Naive thymus-derived CD4-positive, alpha-beta T cell (primary cell): ENCODE measurements at regions of chr6 and their contacts with region 1.

Region 1: GRCh38 chr6:36131511-36132245 is 1.4 kb downstream of the MAPK13 start:
- DNase-seq: peak in 7 of 9 donors; percentile 41 to 58 (median 48)
- ATAC-seq: peak; percentile 67
- H3K4me3 ChIP-seq: peak overlapping the region; percentile 72
- H3K4me3 Mint-ChIP-seq: peak overlapping the region; percentile 85 to 92 (median 88)
- H3K27ac ChIP-seq: peak overlapping the region; percentile 87
- H3K27ac Mint-ChIP-seq: peak overlapping the region; percentile 84 to 96 (median 92)
- H3K4me1 ChIP-seq: peaks cover 24 to 25% of the 10 kb centered on the region in 2 donors
- H3K4me1 Mint-ChIP-seq: peaks cover 37 to 55% (median 49%) of the 10 kb centered on the region in 7 donors
- H3K27me3 ChIP-seq: no peaks in the 10 kb centered on the region
- H3K27me3 Mint-ChIP-seq: no peaks in the 10 kb centered on the region

Region 2: DNA sequence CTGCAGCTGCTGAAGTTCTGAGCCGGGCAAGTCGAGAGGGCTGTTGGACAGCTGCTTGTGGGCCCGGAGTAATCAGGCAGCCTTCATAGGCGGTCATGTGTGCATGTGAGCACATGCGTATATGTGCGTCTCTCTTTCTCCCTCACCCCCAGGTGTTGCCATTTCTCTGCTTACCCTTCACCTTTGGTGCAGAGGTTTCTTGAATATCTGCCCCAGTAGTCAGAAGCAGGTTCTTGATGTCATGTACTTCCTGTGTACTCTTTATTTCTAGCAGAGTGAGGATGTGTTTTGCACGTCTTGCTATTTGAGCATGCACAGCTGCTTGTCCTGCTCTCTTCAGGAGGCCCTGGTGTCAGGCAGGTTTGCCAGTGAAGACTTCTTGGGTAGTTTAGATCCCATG is 22.6 kb before region 1 on chr6:
- CTCF ChIA-PET with region 1: interaction called, 4 read pairs
- POLR2A ChIA-PET with region 1: interaction called, 15 read pairs
- intact Hi-C with region 1: loop called in 1 of 2 experiments (anchors 1 kb)
- DNase-seq: peak in 7 of 9 donors; percentile 70 to 90 (median 84)
- ATAC-seq: peak; percentile 95
- H3K4me3 ChIP-seq: no peak overlapping the region
- H3K4me3 Mint-ChIP-seq: peak overlapping the region; percentile 34 to 67 (median 51)
- H3K27ac ChIP-seq: peak overlapping the region; percentile 69
- H3K27ac Mint-ChIP-seq: peak overlapping the region; percentile 75 to 98 (median 96)
- H3K4me1 ChIP-seq: peaks cover 27 to 46% of the 10 kb centered on the region in 2 donors
- H3K4me1 Mint-ChIP-seq: peaks cover 27 to 78% (median 54%) of the 10 kb centered on the region in 7 donors
- H3K27me3 ChIP-seq: no peaks in the 10 kb centered on the region
- H3K27me3 Mint-ChIP-seq: no peaks in the 10 kb centered on the region